ENCODE measurements at regions of chr18 and their contacts with region 1.

Region 1: GRCh38 chr18:63578357-63578958 is 8.7 kb upstream of the SERPINB13 start:
- DNase-seq: no peak
- ATAC-seq: no peak

Region 2: DNA sequence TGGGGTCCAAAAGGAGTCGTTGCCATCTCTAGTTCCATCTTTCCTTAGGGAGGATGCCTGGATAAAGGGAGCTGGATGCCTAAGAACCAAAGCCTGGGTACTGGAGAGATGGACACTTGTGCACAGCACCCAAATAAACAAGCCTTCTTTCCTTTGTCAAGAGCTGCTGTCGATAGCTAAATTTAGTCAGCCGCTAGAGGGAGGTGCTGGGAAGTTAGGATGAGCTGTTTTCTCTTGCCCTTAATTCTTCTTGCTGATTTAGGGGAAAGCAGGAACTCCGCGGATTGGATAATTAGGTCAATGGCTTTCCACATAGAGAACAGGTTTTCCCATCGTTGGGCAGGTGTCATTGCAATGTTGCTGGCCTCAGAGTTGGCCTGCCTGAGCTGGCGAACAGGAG is 67.2 kb before region 1 on chr18:
- intact Hi-C with region 1: no loop called
- DNase-seq: no peak
- ATAC-seq: peak; percentile 38

Region 3: DNA sequence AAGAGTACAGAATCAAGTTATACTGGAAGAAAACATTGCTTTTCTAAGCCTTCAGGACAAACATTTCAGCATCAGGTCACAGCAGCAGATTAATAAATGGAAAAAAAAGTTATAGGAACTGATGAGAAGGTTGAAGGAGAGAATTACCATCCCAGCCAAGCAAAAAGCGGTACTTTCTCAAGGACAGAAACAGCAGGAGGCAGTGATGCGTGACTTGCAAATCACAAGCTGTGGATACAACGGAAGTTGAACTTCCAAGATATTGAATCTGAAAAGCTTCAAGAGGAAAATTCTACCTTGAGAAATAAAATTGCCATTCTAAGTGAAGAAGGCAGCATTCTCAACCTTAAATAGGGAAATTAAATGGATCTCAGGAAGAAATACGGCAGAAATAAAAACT is 54.8 kb before region 1 on chr18:
- intact Hi-C with region 1: loop called (anchors 5 kb)
- DNase-seq: no peak
- ATAC-seq: no peak

Region 4: GRCh38 chr18:63697107-63697660 is 118.7 kb after region 1 on chr18:
- intact Hi-C with region 1: no loop called
- DNase-seq: no peak
- ATAC-seq: no peak

Measured in Right ventricle myocardium superior (tissue), 1 donor.